B cell (primary cell): ENCODE measurements at regions of chr12 and their contacts with region 1.

Region 1: DNA sequence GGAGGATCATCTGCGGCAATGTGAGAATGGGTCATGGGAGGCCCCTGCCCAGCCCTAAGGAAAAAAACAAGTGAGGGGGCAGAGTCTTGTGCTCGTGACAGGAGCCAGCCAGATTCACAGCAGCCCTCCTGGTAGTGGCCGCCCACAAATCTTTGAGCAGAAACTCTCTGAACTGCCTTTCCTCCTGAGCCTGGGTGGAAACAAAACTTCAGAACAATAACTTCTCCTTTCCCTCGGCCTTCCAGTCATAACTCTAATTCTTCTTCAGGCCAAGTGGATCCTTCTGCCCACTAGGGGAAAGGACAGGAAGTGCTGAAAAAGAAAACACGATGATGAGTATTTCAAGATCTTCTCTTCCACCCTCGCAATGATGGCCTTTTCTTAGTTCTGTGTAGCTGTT is 188.6 kb downstream of the CAND1 start:
- DNase-seq: no peak
- ATAC-seq: no peak
- H3K4me3 ChIP-seq: no peak overlapping the region
- H3K4me3 Mint-ChIP-seq: no peak overlapping the region
- H3K27ac ChIP-seq: no peak overlapping the region
- H3K27ac Mint-ChIP-seq: no peak overlapping the region
- H3K4me1 ChIP-seq: no peaks in the 10 kb centered on the region
- H3K4me1 Mint-ChIP-seq: peaks cover 5% of the 10 kb centered on the region
- H3K27me3 ChIP-seq: peaks cover 0 to 2% (median 0%) of the 10 kb centered on the region in 4 experiments
- H3K27me3 Mint-ChIP-seq: peaks cover 19% of the 10 kb centered on the region
- CTCF ChIP-seq: no peak

Region 2: GRCh38 chr12:67441736-67442346 is 15.9 kb before region 1 on chr12:
- CTCF ChIA-PET with region 1: no interaction called
- POLR2A ChIA-PET with region 1: no interaction called
- intact Hi-C with region 1: no loop called
- DNase-seq: peak; percentile 76
- ATAC-seq: peak; percentile 88
- H3K4me3 ChIP-seq: no peak overlapping the region
- H3K4me3 Mint-ChIP-seq: peak overlapping the region; percentile 18
- H3K27ac ChIP-seq: no peak overlapping the region
- H3K27ac Mint-ChIP-seq: no peak overlapping the region
- H3K4me1 ChIP-seq: peaks cover 7 to 8% of the 10 kb centered on the region in 2 donors
- H3K4me1 Mint-ChIP-seq: peaks cover 8% of the 10 kb centered on the region
- H3K27me3 ChIP-seq: no peaks in the 10 kb centered on the region
- H3K27me3 Mint-ChIP-seq: no peaks in the 10 kb centered on the region
- CTCF ChIP-seq: peak; percentile 83

Region 3: GRCh38 chr12:67509666-67510384 is 52.0 kb after region 1 on chr12:
- CTCF ChIA-PET with region 1: no interaction called
- POLR2A ChIA-PET with region 1: no interaction called
- intact Hi-C with region 1: loop called (anchors 10 kb)
- DNase-seq: no peak
- ATAC-seq: no peak
- H3K4me3 ChIP-seq: no peak overlapping the region
- H3K4me3 Mint-ChIP-seq: no peak overlapping the region
- H3K27ac ChIP-seq: no peak overlapping the region
- H3K27ac Mint-ChIP-seq: no peak overlapping the region
- H3K4me1 ChIP-seq: peaks cover 0 to under 1% of the 10 kb centered on the region in 2 donors
- H3K4me1 Mint-ChIP-seq: peaks cover under 1% of the 10 kb centered on the region
- H3K27me3 ChIP-seq: no peaks in the 10 kb centered on the region
- H3K27me3 Mint-ChIP-seq: no peaks in the 10 kb centered on the region
- CTCF ChIP-seq: no peak